ENCODE measurements at regions of chr12 and their contacts with region 1.

Region 1: DNA sequence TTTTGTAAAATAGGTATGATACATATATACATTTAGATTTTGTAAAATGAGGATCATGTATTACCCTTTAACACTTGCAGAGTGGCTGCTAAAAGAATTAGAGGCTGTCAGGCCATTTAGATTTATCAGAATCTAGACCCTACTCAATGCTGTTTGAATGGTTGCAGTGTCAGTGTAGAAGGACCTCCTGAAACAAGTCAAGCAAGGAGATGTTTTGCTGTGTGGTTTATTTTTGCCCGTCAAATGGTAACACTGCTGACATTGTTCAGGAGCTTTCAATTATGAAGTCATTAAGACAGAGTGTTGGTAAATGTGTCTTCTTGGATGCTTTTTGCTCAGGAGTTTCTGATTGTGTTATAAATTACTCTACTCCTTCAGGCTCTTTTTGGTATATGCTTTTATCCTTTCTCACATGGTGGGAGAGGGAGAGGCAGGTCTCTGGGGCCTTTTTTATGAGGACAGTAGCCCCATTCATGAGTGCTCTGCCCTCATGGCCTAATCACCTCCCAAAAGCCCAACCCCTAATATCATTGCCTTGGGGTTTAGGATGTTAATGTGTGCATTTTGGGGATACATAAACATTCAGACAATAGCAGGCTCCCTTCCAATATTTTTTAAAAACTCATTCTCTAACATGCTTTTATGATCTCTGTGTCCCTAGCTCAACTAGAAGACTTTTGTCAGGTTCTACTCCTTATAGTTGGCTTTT is 16.5 kb downstream of the EID3 start:
- DNase-seq: no peak
- H3K4me3 ChIP-seq: no peak overlapping the region
- H3K27ac ChIP-seq: peak overlapping the region; percentile 56
- H3K4me1 ChIP-seq: peaks cover 66% of the 10 kb centered on the region
- H3K27me3 ChIP-seq: no peaks in the 10 kb centered on the region
- CTCF ChIP-seq: no peak

Region 2: GRCh38 chr12:104303538-104304151 is 16.4 kb before region 1 on chr12 and contains the start of gene EID3:
- CTCF ChIA-PET with region 1: no interaction called
- POLR2A ChIA-PET with region 1: interaction called, 12 read pairs
- intact Hi-C with region 1: no loop called
- DNase-seq: peak; percentile 71 to 80
- H3K4me3 ChIP-seq: peak within 1 kb of the TSS; percentile 59
- H3K27ac ChIP-seq: peak within 1 kb of the TSS; percentile 86
- H3K4me1 ChIP-seq: peaks cover 67% of the 10 kb centered on the region
- H3K27me3 ChIP-seq: no peaks in the 10 kb centered on the region
- CTCF ChIP-seq: no peak
- total RNA-seq, gene EID3: 42.4 and 47.4 TPM in 2 replicates

Region 3: DNA sequence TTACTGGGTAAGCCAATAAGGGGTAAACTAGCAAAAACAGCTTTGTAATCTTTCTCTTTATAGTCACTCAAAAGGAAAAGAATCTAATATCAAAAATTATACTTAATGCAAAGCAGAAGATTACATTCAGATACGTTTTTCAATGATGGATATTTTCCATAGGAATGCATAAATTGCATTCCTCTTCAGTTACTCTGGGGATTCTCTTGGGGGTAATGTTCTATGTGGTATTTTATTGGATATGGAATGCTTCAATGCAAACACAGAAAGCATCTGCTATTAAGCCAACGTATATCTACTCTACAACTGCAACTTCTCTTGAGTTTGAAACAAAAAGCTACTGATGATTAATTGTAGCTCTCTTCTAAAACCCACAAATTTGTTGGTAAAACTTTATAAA is 532.0 kb after region 1 on chr12:
- CTCF ChIA-PET with region 1: no interaction called
- POLR2A ChIA-PET with region 1: no interaction called
- intact Hi-C with region 1: no loop called
- DNase-seq: no peak
- H3K4me3 ChIP-seq: no peak overlapping the region
- H3K27ac ChIP-seq: no peak overlapping the region
- H3K4me1 ChIP-seq: no peaks in the 10 kb centered on the region
- H3K27me3 ChIP-seq: no peaks in the 10 kb centered on the region
- CTCF ChIP-seq: no peak